SK-N-SH (cell line): ENCODE measurements at regions of chr12 and their contacts with region 1.

Region 1: GRCh38 chr12:56117778-56118687 is at the start of gene ZC3H10:
- DNase-seq: peak; percentile 89
- H3K4me3 ChIP-seq: peak within 1 kb of the TSS; percentile 89 to 94
- H3K27ac ChIP-seq: peak within 1 kb of the TSS; percentile 93 to 95
- H3K4me1 ChIP-seq: peaks cover 18 to 20% of the 10 kb centered on the region in 2 experiments; a peak in 3 of 4 replicates
- H3K27me3 ChIP-seq: no peaks in the 10 kb centered on the region
- CTCF ChIP-seq: peak; percentile 51
- EP300 ChIP-seq: peak in 1 of 2 experiments; percentile 51; a peak in 2 of 4 replicates
- RAD21 ChIP-seq: no peak
- polyA plus RNA-seq, gene ZC3H10: 1.9 and 2.0 TPM in 2 replicates

Region 2: GRCh38 chr12:56041552-56042429 is 76.2 kb before region 1 on chr12 and contains the start of gene RPS26:
- CTCF ChIA-PET with region 1: interaction called, 17 read pairs
- POLR2A ChIA-PET with region 1: interaction called, 3 read pairs
- DNase-seq: peak; percentile 89
- H3K4me3 ChIP-seq: peak within 1 kb of the TSS; percentile 81 to 93
- H3K27ac ChIP-seq: peak within 1 kb of the TSS; percentile 90 to 98
- H3K4me1 ChIP-seq: peaks cover 6 to 10% of the 10 kb centered on the region in 2 experiments
- H3K27me3 ChIP-seq: no peaks in the 10 kb centered on the region
- CTCF ChIP-seq: peak; percentile 50
- EP300 ChIP-seq: no peak
- RAD21 ChIP-seq: peak; percentile 71
- polyA plus RNA-seq, gene RPS26: 1,500 and 1,782 TPM in 2 replicates

Region 3: GRCh38 chr12:56104109-56104814 is 13.8 kb before region 1 on chr12 and contains the start of gene PA2G4:
- CTCF ChIA-PET with region 1: interaction called, 6 read pairs
- POLR2A ChIA-PET with region 1: interaction called, 33 read pairs
- DNase-seq: peak; percentile 95
- H3K4me3 ChIP-seq: peak within 1 kb of the TSS; percentile 89 to 90
- H3K27ac ChIP-seq: peak within 1 kb of the TSS; percentile 76 to 89
- H3K4me1 ChIP-seq: peaks cover 5 to 19% of the 10 kb centered on the region in 2 experiments; a peak in 3 of 4 replicates
- H3K27me3 ChIP-seq: no peaks in the 10 kb centered on the region
- CTCF ChIP-seq: no peak
- EP300 ChIP-seq: no peak
- RAD21 ChIP-seq: no peak
- polyA plus RNA-seq, gene PA2G4: 207 and 213 TPM in 2 replicates

Region 4: DNA sequence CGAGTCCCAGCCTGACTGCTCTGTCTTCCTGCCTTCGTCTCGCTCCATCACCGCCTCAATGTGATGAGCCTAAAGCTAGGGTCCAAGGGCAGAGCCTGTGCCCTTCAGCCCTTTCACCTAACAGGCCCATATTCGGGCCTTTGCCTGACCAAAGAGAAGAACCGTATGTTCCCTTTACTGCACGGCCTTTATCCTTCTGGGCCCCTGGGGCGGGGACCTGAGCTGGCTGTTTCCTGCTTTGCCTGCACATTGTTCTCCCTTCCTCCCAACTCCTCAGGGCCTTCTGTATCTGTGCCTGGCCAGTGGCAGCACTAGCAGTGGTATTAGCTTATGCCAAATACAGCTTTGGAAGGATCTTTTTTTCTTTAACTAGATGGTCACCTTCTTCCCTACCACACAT is 25.8 kb after region 1 on chr12:
- CTCF ChIA-PET with region 1: interaction called, 16 read pairs
- POLR2A ChIA-PET with region 1: interaction called, 3 read pairs
- DNase-seq: no peak
- H3K4me3 ChIP-seq: no peak overlapping the region
- H3K27ac ChIP-seq: no peak overlapping the region
- H3K4me1 ChIP-seq: peaks cover 0 to 2% of the 10 kb centered on the region in 2 experiments; a peak in 1 of 4 replicates
- H3K27me3 ChIP-seq: no peaks in the 10 kb centered on the region
- CTCF ChIP-seq: no peak
- EP300 ChIP-seq: no peak
- RAD21 ChIP-seq: no peak

Region 5: GRCh38 chr12:56152318-56153033 is 34.4 kb after region 1 on chr12 and contains the start of gene MYL6B:
- CTCF ChIA-PET with region 1: interaction called, 13 read pairs
- POLR2A ChIA-PET with region 1: interaction called, 4 read pairs
- DNase-seq: peak; percentile 93
- H3K4me3 ChIP-seq: peak within 1 kb of the TSS; percentile 62 to 87
- H3K27ac ChIP-seq: peak within 1 kb of the TSS; percentile 85 to 86
- H3K4me1 ChIP-seq: peaks cover 23% of the 10 kb centered on the region in 2 experiments; a peak in 3 of 4 replicates
- H3K27me3 ChIP-seq: no peaks in the 10 kb centered on the region
- CTCF ChIP-seq: no peak
- EP300 ChIP-seq: no peak; a peak in 1 of 4 replicates
- RAD21 ChIP-seq: no peak
- polyA plus RNA-seq, gene MYL6B: 203 and 234 TPM in 2 replicates

Region 6: GRCh38 chr12:56158029-56158925 is 40.2 kb after region 1 on chr12 and contains the start of gene MYL6:
- CTCF ChIA-PET with region 1: interaction called, 13 read pairs
- POLR2A ChIA-PET with region 1: interaction called, 6 read pairs
- DNase-seq: peak; percentile 90
- H3K4me3 ChIP-seq: peak within 1 kb of the TSS; percentile 82 to 87
- H3K27ac ChIP-seq: peak within 1 kb of the TSS; percentile 82 to 89
- H3K4me1 ChIP-seq: peaks cover 30 to 39% of the 10 kb centered on the region in 2 experiments; a peak in 3 of 4 replicates
- H3K27me3 ChIP-seq: no peaks in the 10 kb centered on the region
- CTCF ChIP-seq: no peak
- EP300 ChIP-seq: no peak
- RAD21 ChIP-seq: no peak
- polyA plus RNA-seq, gene MYL6: 4,697 and 4,711 TPM in 2 replicates

Region 7: GRCh38 chr12:56224102-56224701 is 106.2 kb after region 1 on chr12 and contains the start of gene NABP2:
- CTCF ChIA-PET with region 1: interaction called, 21 read pairs
- POLR2A ChIA-PET with region 1: interaction called, 7 read pairs
- DNase-seq: peak; percentile 98
- H3K4me3 ChIP-seq: peak within 1 kb of the TSS; percentile 67 to 97
- H3K27ac ChIP-seq: peak within 1 kb of the TSS; percentile 62 to 64
- H3K4me1 ChIP-seq: peaks cover 13 to 22% of the 10 kb centered on the region in 2 experiments; a peak in 2 of 4 replicates
- H3K27me3 ChIP-seq: no peaks in the 10 kb centered on the region
- CTCF ChIP-seq: peak; percentile 89
- EP300 ChIP-seq: no peak; a peak in 1 of 4 replicates
- RAD21 ChIP-seq: peak; percentile 56
- polyA plus RNA-seq, gene NABP2: 49.3 and 52.3 TPM in 2 replicates

Region 8: GRCh38 chr12:56274299-56274698 is 156.3 kb after region 1 on chr12:
- CTCF ChIA-PET with region 1: no interaction called
- POLR2A ChIA-PET with region 1: no interaction called
- DNase-seq: no peak
- H3K4me3 ChIP-seq: no peak overlapping the region
- H3K27ac ChIP-seq: no peak overlapping the region
- H3K4me1 ChIP-seq: no peaks in the 10 kb centered on the region
- H3K27me3 ChIP-seq: no peaks in the 10 kb centered on the region
- CTCF ChIP-seq: no peak
- EP300 ChIP-seq: no peak
- RAD21 ChIP-seq: no peak